Activated naive CD8-positive, alpha-beta T cell treated with anti-CD3 and anti-CD28 coated beads, Interleukin-2, amount 10 ng/mL, durations not matched to agents 7 days and 5 days (primary cell): ENCODE measurements at regions of chr4 and their contacts with region 1.

Region 1: DNA sequence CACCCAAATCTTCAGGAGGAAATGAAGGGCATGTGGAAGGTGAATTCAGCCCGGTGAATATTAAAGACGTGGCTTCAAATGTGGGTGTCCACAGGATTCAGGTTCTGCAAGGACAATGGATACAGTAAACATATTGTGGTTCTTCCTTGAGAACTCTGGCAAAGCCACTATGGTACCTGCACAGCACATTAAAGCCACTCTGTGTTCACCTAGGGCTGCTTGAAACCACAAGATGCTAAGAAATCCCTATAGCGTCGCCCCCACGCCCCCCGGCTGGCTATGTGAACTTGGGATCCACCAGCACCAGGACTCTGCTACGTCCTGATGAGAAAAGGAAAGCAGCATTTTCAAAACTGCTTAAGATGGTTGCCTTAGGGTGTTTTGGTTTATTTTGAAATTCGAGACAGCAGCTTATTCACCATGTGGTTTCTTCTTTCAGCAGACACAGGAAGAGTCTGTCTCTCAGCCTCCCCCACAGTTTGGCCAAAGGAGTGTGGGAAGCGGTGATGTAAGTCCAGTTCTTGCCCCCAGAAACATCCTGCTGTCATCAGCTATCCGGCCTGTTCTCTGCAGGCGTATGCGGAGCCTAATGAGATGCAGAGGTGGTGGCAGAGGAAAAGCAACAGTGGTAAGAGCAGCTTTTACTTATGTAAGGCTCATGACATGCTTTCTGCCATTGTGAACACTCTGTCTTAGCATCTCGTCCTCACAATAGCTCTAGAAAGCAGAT is 111.5 kb downstream of the AFAP1 start:
- DNase-seq: peak; percentile 42
- ATAC-seq: peak; percentile 88
- H3K4me3 Mint-ChIP-seq: peak overlapping the region; percentile 73
- H3K27ac Mint-ChIP-seq: peak overlapping the region; percentile 89
- H3K4me1 Mint-ChIP-seq: peaks cover 27% of the 10 kb centered on the region
- H3K27me3 Mint-ChIP-seq: no peaks in the 10 kb centered on the region

Region 2: DNA sequence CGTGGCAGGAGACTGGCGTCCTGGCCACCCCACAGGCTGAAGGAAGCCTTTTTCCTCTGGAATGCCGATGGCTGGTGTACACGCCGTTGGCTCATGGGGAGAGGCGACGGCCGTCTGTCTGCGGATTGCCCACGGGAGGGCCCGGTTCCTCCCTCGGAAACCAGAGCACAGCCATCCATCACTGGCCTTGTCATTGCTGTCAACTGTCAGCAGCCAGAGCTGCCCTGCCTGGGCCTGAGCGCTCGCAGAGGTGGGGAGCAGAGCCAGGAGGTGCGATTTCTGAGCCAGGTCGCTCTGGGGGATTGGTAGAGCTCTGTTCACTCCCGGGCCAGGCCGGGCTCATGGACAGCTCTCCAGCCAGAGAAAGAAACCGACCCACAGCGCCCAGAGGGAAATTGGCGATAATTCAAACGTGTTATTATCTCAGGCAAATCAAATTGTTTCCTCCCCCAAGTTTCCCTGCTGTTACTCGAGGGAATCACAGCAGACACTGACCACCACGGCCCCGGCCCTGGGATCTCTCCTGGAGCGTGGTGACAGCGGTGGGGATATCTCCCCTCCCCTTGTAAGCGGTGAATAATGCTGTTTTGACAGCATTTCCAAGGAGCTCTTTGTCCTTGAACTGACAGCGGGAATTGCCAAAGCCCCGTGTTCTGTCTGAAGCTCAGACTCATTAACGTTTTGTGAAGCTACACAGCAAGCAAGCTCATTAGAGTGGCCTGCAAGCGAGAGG is 172.5 kb before region 1 on chr4:
- POLR2A ChIA-PET with region 1: no interaction called
- DNase-seq: no peak
- ATAC-seq: no peak
- H3K4me3 Mint-ChIP-seq: no peak overlapping the region
- H3K27ac Mint-ChIP-seq: no peak overlapping the region
- H3K4me1 Mint-ChIP-seq: peaks cover 8% of the 10 kb centered on the region
- H3K27me3 Mint-ChIP-seq: peaks cover 13% of the 10 kb centered on the region

Region 3: DNA sequence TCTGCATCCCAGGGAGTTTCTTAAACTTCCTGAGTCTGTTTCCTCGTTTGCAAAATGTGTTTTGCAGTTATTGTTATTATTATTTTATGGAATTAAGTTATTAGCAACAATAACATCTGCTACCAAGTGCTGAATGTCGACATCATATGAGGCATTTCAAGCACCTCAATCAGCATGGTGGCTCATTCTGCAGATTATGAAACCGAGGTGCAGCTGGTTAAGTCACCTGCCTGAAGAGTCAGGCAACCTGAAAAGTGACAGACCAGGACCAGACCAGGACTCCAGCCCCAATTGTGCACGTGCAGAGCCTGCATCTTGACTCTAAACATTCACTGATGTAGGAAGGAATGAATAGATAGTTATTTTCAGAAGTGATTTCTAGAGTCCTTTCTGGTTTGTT is 11.7 kb after region 1 on chr4:
- POLR2A ChIA-PET with region 1: no interaction called
- DNase-seq: no peak
- ATAC-seq: no peak
- H3K4me3 Mint-ChIP-seq: no peak overlapping the region
- H3K27ac Mint-ChIP-seq: no peak overlapping the region
- H3K4me1 Mint-ChIP-seq: peaks cover 9% of the 10 kb centered on the region
- H3K27me3 Mint-ChIP-seq: no peaks in the 10 kb centered on the region

Region 4: DNA sequence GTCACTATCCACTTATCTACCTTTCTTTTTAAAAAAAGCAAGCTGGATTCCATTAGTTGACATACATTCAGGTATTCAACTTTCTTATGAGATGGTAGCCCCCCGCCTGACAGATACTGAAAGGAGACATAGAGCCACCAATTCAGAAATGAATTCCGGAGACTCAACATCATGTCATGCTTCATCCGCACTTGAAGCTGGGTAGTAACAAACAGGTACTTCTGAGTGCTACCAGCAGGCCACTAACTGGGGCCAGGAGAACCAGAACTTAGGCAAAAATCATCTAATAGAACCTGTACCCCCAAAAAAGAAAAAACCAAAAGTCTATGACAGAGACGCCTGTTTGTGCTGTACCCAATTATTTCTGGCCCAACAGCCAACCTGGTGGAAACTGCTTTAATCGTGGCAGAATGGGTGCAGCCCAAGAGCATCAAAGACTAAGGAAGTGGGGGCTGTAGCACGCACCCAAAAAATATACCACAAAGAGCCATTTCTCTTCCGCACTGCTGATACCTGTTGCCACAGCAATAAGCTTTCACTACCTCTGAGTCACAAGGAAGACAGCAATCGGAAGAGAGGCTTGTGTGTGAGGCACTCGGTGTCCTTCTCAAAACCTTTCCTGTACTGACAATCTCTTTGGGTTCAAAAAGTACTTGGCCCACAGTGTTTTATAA is 26.7 kb after region 1 on chr4:
- POLR2A ChIA-PET with region 1: interaction called, 11 read pairs
- DNase-seq: peak; percentile 44
- ATAC-seq: peak; percentile 94
- H3K4me3 Mint-ChIP-seq: peak overlapping the region; percentile 69
- H3K27ac Mint-ChIP-seq: peak overlapping the region; percentile 94
- H3K4me1 Mint-ChIP-seq: peaks cover 37% of the 10 kb centered on the region
- H3K27me3 Mint-ChIP-seq: no peaks in the 10 kb centered on the region